ENCODE measurements at regions of chr10 and their contacts with region 1.

Region 1: DNA sequence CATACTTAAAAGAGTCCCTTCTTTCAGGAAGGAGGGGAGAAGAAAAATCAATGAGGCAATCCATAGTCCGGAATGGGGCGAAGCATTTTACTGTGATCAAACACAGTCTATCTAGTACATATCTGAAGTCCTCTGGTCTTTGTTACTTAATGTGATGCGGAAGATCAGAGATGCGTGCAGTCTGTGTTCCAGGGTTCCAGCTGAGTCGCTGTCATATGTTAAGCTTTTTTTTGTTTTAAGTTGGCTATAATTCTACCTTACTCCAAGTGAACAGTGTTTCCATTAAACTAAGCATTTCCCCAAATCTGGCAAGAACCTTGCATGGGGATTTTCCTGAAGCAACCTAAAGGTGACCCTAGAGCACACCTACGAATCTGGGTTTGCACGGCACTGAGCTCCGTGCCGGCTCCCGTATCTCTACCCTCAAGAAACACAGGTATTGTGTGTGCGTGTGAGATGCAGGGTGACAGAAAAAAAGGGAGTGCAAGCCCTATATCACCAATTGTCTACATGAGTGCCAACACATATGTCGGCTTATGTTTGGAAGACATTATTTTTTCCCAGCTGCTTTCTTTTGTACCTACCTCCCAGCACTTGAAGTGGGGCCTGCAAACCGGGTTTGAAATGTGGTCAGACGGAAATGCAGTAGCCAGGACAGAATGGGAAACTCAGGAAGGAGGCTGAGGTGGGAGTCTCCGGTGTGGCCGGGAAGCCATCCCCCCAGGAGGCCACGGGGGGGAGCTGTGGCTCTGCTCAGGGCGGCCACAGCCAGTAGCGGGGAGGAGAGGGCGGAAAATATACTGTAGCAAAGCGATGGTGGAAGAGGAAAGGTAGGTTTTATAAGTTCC is 435.8 kb upstream of the MGMT start:
- DNase-seq: peak; percentile 39
- ATAC-seq: peak; percentile 80; the same call in 1 of the 2 replicates
- H3K4me3 ChIP-seq: no peak overlapping the region
- H3K27ac ChIP-seq: no peak overlapping the region
- H3K4me1 ChIP-seq: no peaks in the 10 kb centered on the region
- H3K27me3 ChIP-seq: peaks cover 67% of the 10 kb centered on the region
- CTCF ChIP-seq: peak; percentile 81

Region 2: DNA sequence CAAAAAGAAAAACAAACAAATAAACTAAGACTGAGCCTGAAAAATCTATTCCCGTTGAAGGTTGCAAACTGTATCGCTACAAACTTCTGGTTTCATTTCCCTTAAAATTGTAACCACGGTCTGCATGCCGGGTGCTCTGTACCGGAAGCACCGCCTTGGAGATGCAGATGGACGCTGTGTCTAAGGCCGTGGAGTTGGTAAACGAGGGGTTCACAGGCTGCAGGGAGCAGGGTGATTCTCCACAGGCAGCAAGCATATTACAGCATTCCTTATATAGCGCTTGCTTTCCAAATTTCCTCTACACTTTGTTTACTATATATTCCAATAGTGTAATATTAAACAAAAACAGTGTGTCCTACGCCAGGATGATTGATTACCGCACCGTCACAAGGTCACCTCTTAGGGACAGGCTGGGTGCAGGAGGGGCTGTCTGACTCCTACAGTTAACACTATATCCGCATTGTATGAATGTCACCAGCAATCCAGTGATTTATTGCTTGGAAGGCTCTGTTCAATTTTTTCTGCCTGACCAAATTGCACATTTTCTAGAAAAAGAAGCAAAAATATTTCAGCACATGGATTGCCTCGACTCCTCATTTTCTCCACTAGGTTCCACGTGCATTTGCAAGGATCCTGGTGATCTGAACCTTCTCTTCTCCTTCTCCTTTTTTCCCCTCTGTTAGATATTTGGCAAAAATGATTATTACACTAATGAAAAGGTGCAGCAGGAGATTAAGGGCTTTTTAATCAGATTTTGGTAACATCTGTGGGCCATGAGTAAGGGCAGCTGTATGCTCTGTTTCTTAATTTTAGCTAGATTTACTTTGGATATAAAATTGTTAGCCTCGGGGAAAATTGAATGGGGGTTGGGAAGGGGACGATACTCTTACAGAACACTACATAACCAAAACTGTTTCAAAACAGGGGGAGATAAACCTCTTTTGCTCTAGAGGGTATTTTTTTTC is 110.0 kb after region 1 on chr10:
- CTCF ChIA-PET with region 1: no interaction called
- POLR2A ChIA-PET with region 1: no interaction called
- intact Hi-C with region 1: no loop called
- DNase-seq: no peak
- ATAC-seq: no peak
- H3K4me3 ChIP-seq: no peak overlapping the region
- H3K27ac ChIP-seq: no peak overlapping the region
- H3K4me1 ChIP-seq: no peaks in the 10 kb centered on the region
- H3K27me3 ChIP-seq: no peaks in the 10 kb centered on the region
- CTCF ChIP-seq: no peak

Region 3: DNA sequence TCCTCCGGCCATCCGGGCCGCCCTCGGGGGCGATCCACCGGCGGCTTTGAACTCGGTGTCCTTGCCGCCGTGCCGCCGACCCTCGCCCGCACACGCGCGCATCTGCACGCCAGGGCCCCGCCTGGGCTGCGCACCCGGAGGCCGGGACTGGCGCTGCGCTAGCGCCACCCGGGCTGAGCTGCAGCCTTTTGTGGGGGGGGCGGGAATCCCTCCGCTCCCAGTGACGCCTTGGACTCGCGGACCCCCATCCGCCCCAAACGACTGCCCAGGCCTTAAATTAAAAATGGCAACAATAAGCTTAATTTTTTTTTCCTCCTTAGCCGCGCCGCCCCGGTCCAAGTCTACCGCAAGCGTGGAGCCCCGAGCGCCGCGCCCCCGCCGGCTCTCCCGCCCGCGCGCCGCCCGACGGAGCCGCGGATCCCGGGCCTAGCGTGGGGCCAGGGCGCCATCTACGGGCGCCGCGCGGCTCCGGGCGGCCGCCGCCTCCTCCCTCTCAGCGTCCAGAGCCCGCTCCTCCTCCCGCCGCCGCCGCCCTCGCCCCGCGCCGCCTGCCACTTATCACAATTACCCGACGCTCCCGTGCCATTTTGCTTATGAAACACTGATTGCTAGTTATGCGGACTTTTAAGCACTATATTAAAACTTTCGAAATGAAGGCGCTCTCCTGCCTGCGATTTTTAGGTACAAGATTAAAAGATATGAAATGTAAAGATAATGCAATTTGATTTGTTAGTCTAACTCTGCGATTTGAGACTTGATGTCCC is 940.3 kb after region 1 on chr10:
- CTCF ChIA-PET with region 1: no interaction called
- POLR2A ChIA-PET with region 1: no interaction called
- intact Hi-C with region 1: loop called (anchors 2 kb)
- DNase-seq: peak; percentile 56
- ATAC-seq: peak; percentile 84
- H3K4me3 ChIP-seq: peak overlapping the region; percentile 59
- H3K27ac ChIP-seq: no peak overlapping the region
- H3K4me1 ChIP-seq: peaks cover 6% of the 10 kb centered on the region
- H3K27me3 ChIP-seq: peaks cover 52% of the 10 kb centered on the region
- CTCF ChIP-seq: no peak; the same call in 1 of the 2 replicates

Measured in PC-3 (cell line).